Activated CD8-positive, alpha-beta T cell treated with anti-CD3 and anti-CD28 coated beads, Interleukin-2, amount 10 ng/mL, durations not matched to agents 7 days and 5 days (primary cell): ENCODE measurements at regions of chr4 and their contacts with region 1.

Region 1: DNA sequence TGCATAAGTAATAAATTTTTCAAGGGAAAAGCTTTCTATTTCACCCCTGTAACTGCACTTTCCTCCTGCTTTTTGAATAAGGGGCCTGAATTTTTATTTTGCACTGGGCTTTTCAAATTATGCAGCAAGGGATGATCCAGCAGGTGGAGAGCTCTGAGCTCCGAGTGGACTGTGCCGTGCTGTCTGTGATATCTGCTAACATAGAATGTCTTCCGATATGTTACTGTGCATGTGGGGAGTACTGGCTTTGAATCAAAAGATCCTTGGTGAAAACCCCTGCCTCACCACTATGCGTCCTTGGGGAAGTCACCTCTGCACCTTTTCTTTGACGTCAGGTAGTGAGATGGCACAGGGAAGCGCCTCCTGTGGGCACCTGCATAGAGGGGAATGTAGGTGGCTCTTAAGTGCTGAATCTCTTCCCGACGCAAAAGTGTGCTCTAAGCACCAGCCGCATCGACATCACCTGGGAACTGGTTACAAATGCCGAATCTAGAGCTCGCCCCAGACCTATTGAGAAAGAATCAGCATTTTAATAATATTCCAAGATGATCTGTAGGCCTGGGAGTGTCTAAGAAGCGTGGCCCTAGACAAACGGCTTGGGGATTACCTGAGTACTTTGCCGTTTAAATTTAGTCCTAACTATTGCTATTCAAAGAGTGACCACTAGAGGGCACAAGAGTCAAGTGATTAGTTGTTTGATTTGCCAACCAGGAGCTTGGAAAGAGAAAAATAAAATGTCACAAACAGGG is 19.2 kb upstream of the WFS1 start:
- DNase-seq: peak; percentile 42
- ATAC-seq: peak; percentile 33
- H3K4me3 Mint-ChIP-seq: no peak overlapping the region
- H3K27ac Mint-ChIP-seq: no peak overlapping the region
- H3K4me1 Mint-ChIP-seq: no peaks in the 10 kb centered on the region
- H3K27me3 Mint-ChIP-seq: peaks cover 26% of the 10 kb centered on the region

Region 2: DNA sequence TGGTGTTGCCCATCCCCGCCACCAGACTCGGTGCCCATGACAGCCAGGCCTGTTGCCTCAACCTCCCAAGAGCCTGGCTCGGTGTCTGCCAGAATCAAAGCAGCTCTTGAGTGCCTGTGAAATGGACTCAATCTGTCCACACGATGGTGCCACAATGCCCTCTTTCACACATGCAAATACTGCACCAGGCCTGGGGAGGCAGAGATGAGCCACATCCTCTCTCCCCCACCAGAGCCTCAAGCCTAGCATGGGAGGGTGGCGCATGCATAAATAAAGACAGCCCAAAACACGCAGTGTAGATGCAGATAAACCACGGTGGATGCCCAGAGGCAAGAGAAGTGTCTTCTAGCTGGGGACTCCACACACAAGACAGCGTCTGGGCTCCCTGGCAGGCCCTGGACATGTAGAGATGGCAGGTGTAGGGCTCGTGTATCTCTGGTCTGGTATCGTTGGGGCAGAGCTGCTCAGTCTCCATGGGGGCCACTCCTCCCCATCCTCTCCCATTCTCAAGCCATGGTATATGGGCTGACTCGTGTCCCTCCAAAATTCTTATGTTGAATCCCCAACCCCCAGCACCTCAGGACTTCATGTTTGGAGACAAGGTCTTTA is 115.7 kb before region 1 on chr4:
- CTCF ChIA-PET with region 1: interaction called, 21 read pairs
- POLR2A ChIA-PET with region 1: no interaction called
- DNase-seq: peak; percentile 73
- ATAC-seq: peak; percentile 97
- H3K4me3 Mint-ChIP-seq: no peak overlapping the region
- H3K27ac Mint-ChIP-seq: peak overlapping the region; percentile 59
- H3K4me1 Mint-ChIP-seq: peaks cover 16% of the 10 kb centered on the region
- H3K27me3 Mint-ChIP-seq: peaks cover 2% of the 10 kb centered on the region

Region 3: GRCh38 chr4:6200011-6200921 is 50.1 kb before region 1 on chr4 and contains the start of gene JAKMIP1:
- CTCF ChIA-PET with region 1: interaction called, 10 read pairs
- POLR2A ChIA-PET with region 1: no interaction called
- DNase-seq: peak; percentile 85
- ATAC-seq: peak; percentile 80
- H3K4me3 Mint-ChIP-seq: peak within 1 kb of the TSS; percentile 76
- H3K27ac Mint-ChIP-seq: peak within 1 kb of the TSS; percentile 60
- H3K4me1 Mint-ChIP-seq: peaks cover 35% of the 10 kb centered on the region
- H3K27me3 Mint-ChIP-seq: peaks cover 45% of the 10 kb centered on the region
- total RNA-seq, gene JAKMIP1: 9.3 to 9.6 TPM

Region 4: DNA sequence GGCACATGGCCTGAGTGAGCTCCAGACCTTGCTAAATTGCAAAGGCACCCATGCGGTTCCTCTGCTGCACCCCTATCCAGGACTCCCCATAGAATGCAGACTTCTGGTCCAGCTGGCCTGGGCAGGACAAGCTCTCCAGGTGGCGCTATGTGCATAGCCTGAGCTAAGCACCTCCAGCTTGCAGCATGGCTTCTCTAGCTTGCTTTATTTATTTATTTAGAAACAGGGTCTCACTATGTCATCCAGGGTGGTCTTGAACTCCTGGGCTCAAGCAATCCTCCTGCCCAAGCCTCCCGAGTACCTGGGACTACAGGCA is 13.8 kb after region 1 on chr4:
- CTCF ChIA-PET with region 1: interaction called, 32 read pairs
- POLR2A ChIA-PET with region 1: no interaction called
- DNase-seq: peak; percentile 45
- ATAC-seq: peak; percentile 51
- H3K4me3 Mint-ChIP-seq: no peak overlapping the region
- H3K27ac Mint-ChIP-seq: no peak overlapping the region
- H3K4me1 Mint-ChIP-seq: peaks cover 14% of the 10 kb centered on the region
- H3K27me3 Mint-ChIP-seq: peaks cover 31% of the 10 kb centered on the region

Region 5: DNA sequence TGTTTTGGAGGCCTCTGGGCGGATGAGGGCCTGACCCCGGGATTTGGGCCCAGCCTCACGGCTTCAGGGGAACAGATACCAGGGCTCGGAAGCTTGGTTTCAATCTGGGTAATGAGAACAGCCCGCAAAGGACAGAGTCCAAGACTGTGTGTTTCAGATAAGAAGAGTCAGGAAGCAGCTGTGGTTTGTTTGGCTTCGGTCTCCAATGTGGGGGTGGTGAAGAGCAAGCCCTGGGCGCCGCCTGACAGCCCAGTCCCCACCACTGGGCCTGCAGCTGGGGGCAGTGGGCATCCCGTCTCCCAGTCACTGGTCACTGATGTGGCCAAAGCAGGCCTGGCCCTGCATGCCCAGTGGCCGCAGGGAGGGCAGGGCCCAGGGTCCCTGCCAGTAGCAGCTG is 28.4 kb after region 1 on chr4:
- CTCF ChIA-PET with region 1: interaction called, 10 read pairs
- POLR2A ChIA-PET with region 1: no interaction called
- DNase-seq: peak; percentile 49
- ATAC-seq: peak; percentile 63
- H3K4me3 Mint-ChIP-seq: no peak overlapping the region
- H3K27ac Mint-ChIP-seq: no peak overlapping the region
- H3K4me1 Mint-ChIP-seq: peaks cover 13% of the 10 kb centered on the region
- H3K27me3 Mint-ChIP-seq: peaks cover 12% of the 10 kb centered on the region